GM12878 (cell line): ENCODE measurements at regions of chr4 and their contacts with region 1.

Region 1: DNA sequence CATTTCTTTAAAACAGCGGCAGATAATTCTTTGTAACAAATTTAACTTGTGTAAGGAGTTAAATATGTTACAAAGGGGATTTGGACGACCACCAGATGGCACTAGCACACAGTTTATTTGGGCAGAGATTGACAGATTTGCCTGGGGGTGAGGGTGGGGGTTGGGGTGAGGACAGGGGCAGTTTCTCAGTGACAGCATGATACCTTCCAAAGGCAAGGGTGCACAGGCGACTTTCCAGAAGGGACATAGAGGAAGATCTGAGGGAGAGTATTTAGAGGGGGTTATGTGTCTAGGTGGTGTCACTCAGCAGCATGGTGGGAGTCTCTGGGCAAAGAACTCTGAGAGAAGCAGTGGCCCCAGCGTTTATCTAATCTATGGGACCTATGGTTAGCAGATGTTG is 9.6 kb upstream of the TMA16 start:
- DNase-seq: no peak
- ATAC-seq: peak; percentile 87
- H3K4me3 ChIP-seq: no peak overlapping the region
- H3K27ac ChIP-seq: no peak overlapping the region
- H3K4me1 ChIP-seq: peaks cover 12% of the 10 kb centered on the region; the same call in 1 of the 2 replicates
- H3K27me3 ChIP-seq: no peaks in the 10 kb centered on the region
- CTCF ChIP-seq: peak; percentile 55 to 73 (median 59); a peak in 5 of 6 replicates
- EP300 ChIP-seq: no peak
- POLR2A ChIP-seq: no peak
- RAD21 ChIP-seq: peak; percentile 91

Region 2: DNA sequence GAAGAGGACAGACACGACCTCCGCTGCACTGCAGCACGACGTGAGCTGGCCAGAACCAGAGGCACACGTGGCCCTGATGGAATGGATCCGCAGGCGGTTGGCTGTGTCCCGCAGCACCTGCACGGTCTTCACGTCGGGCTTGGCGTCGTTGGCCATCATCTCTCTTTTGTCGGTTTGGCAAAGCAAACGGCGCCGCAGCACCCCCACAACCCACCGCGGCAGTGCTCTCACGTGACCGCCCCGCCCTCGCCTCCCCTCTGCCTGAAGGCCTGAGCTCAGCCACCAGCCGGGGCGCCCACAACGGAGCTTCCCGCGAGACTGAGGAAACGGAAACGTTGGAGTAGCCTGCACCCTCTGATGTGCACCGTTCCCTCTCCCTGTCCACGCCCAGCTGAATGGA is 11.3 kb before region 1 on chr4 and contains the start of gene TKTL2:
- CTCF ChIA-PET with region 1: interaction called, 11 read pairs
- POLR2A ChIA-PET with region 1: no interaction called
- RAD21 ChIA-PET with region 1: no interaction called
- SMC1A ChIA-PET with region 1: no interaction called
- in situ Hi-C with region 1: no loop called
- intact Hi-C with region 1: no loop called
- DNase-seq: no peak
- ATAC-seq: no peak
- H3K4me3 ChIP-seq: no peak within 1 kb of the TSS
- H3K27ac ChIP-seq: no peak within 1 kb of the TSS
- H3K4me1 ChIP-seq: no peaks in the 10 kb centered on the region
- H3K27me3 ChIP-seq: no peaks in the 10 kb centered on the region
- CTCF ChIP-seq: no peak
- EP300 ChIP-seq: no peak
- POLR2A ChIP-seq: no peak
- RAD21 ChIP-seq: no peak
- polyA plus RNA-seq, gene TKTL2: 0.03 TPM in 1 of 2 experiments, not detected in the other

Region 3: DNA sequence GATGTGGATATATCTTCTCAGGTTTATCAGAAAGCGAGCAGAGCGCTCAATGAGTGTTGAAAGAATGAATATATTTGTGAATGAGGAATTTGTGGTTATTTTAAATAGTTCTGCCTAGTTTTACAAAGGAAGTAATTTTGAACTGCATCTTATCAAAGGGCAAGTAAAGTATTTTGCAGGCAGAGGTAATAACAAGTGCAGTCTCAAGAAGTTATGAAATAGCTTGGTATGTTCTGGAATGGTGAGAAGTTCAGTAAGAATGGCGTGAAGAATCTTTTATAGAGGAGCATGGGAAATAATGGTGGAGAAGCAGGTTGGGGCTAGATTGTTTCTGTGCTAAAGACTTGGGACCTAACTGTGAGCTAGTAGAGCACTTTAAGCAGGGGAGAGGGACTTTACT is 20.5 kb after region 1 on chr4:
- CTCF ChIA-PET with region 1: interaction called, 13 read pairs
- POLR2A ChIA-PET with region 1: no interaction called
- RAD21 ChIA-PET with region 1: no interaction called
- SMC1A ChIA-PET with region 1: interaction called, 5 read pairs
- in situ Hi-C with region 1: no loop called
- intact Hi-C with region 1: no loop called
- DNase-seq: no peak
- ATAC-seq: peak; percentile 11; the same call in 2 of the 3 replicates
- H3K4me3 ChIP-seq: no peak overlapping the region
- H3K27ac ChIP-seq: no peak overlapping the region
- H3K4me1 ChIP-seq: peaks cover 10% of the 10 kb centered on the region
- H3K27me3 ChIP-seq: no peaks in the 10 kb centered on the region
- CTCF ChIP-seq: no peak
- EP300 ChIP-seq: no peak
- POLR2A ChIP-seq: no peak
- RAD21 ChIP-seq: no peak

Region 4: GRCh38 chr4:164012396-164013027 is 527.6 kb after region 1 on chr4:
- CTCF ChIA-PET with region 1: no interaction called
- POLR2A ChIA-PET with region 1: no interaction called
- RAD21 ChIA-PET with region 1: no interaction called
- SMC1A ChIA-PET with region 1: no interaction called
- in situ Hi-C with region 1: no loop called
- intact Hi-C with region 1: loop called (anchors 10 kb)
- DNase-seq: no peak
- ATAC-seq: peak; percentile 78
- H3K4me3 ChIP-seq: no peak overlapping the region
- H3K27ac ChIP-seq: no peak overlapping the region
- H3K4me1 ChIP-seq: no peaks in the 10 kb centered on the region
- H3K27me3 ChIP-seq: no peaks in the 10 kb centered on the region
- CTCF ChIP-seq: peak; percentile 30 to 54 (median 40); a peak in 4 of 6 replicates
- EP300 ChIP-seq: no peak
- POLR2A ChIP-seq: no peak
- RAD21 ChIP-seq: peak; percentile 66